ENCODE measurements at regions of chr4 and their contacts with region 1.

Region 1: DNA sequence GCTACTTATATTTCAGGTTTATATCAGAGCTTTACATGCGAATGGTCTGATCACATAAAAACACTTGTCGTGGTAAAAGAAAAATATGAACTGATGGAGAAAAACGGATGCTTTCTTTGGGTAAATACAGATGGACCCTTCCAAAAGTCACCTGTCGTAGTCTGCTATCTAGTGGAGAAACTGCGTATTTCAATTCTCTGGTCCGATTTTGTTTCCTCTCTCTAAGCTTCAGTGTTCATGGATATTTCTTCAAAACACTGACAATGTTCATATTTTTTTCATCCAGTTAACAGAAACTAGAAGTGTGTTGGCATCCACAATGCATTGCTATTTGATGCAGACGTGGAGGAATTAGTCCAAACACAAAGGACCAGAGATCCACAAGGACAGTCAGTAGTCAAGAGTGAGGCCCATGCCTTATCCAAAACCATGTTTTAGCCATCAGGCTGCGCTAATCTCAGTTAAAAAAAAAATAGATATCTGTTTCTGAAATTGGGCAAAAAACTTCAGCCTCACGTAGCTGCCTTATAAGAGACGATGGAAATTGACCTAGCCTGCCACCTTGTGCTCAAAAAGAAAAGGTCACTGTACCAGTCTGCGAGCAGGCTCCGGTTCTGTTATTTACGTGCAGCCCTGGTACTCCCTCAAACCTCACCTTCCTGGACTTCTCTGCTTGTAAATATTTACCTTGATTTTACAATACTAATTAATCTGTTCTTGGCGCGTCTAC is 16.0 kb downstream of the MEPE start:
- DNase-seq: peak; percentile 60
- ATAC-seq: peak; percentile 93
- H3K4me3 Mint-ChIP-seq: no peak overlapping the region
- H3K27ac Mint-ChIP-seq: no peak overlapping the region
- H3K4me1 Mint-ChIP-seq: peaks cover 11% of the 10 kb centered on the region
- H3K27me3 Mint-ChIP-seq: peaks cover 15% of the 10 kb centered on the region

Region 2: DNA sequence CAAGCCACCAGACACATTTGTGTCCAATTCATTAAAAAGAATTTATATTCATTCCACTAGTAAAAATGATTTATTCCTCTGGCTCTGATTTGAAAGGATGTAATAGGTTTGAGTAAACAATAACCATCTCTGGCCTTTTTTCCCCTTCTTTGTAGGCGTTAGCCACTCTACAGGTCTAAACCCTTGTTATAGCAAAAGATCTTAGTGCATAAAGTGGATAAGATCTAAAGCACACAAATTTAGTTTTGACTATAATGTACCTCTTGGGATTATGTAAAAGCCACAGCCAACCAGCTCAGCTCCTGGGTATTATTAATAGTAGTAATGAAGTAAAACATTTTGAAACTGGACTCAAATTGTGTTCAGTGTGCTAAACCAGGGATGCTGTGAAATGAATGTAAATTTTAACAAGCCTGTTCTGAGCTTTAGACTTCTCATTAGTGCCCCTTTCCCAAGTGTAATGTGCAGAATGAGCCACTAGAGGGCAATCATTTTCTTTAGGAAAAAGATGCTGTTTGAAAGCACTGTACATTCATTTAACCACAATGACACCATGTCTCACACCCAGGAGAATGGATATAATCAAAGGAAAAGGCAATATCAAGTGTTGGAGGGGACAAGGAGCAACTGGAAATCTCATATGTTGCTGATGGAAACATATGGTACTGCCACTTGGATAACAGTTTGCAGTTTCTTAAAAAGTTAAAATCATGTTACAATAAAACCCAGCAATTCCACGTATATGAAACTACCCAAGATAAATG is 698.1 kb before region 1 on chr4:
- CTCF ChIA-PET with region 1: interaction called, 3 read pairs
- POLR2A ChIA-PET with region 1: no interaction called
- intact Hi-C with region 1: loop called in 1 of 2 experiments (anchors 5 kb)
- DNase-seq: peak; percentile 56
- ATAC-seq: peak; percentile 76
- H3K4me3 Mint-ChIP-seq: no peak overlapping the region
- H3K27ac Mint-ChIP-seq: no peak overlapping the region
- H3K4me1 Mint-ChIP-seq: no peaks in the 10 kb centered on the region
- H3K27me3 Mint-ChIP-seq: no peaks in the 10 kb centered on the region

Region 3: GRCh38 chr4:87498446-87498900 is 350.3 kb before region 1 on chr4:
- CTCF ChIA-PET with region 1: interaction called, 3 read pairs
- POLR2A ChIA-PET with region 1: no interaction called
- intact Hi-C with region 1: loop called in 1 of 2 experiments (anchors 5 kb)
- DNase-seq: no peak
- ATAC-seq: peak; percentile 47
- H3K4me3 Mint-ChIP-seq: no peak overlapping the region
- H3K27ac Mint-ChIP-seq: no peak overlapping the region
- H3K4me1 Mint-ChIP-seq: peaks cover 17% of the 10 kb centered on the region
- H3K27me3 Mint-ChIP-seq: peaks cover 2% of the 10 kb centered on the region

Region 4: DNA sequence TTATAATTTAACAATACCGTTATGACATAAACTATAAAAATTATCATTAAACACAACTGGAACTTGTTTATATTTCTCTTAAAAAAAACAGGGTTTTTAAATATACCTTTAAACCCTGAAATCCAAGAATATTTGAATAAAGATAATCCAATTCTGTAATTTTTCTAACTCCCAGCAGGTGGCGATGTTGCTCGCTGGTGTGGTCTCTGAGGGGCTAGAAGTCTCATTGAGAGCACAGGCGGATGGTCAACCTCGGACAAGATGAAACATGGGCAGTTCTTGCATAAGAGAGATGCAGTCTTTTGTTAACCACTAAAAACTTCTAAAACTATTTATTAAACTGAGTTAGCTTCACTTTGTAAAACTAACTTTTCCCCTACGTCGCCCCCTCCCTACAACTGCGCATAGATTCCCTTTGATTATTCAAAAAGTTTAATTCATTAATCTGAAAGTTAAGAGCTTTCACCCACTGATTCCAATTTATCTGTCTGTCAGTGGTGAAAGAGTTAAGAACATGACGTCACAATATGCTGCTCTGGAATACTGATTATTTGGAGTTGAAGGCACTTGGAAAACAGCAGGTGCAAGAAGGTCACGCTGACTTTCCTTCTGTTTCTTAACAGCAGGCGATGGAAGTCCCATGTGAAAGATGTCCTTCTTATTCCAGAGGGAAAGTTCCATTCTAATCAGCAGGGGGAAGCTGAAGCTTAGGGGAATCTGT is 169.2 kb before region 1 on chr4:
- CTCF ChIA-PET with region 1: interaction called, 15 read pairs
- POLR2A ChIA-PET with region 1: no interaction called
- intact Hi-C with region 1: loop called (anchors 1 kb)
- DNase-seq: peak; percentile 62
- ATAC-seq: no peak
- H3K4me3 Mint-ChIP-seq: no peak overlapping the region
- H3K27ac Mint-ChIP-seq: no peak overlapping the region
- H3K4me1 Mint-ChIP-seq: no peaks in the 10 kb centered on the region
- H3K27me3 Mint-ChIP-seq: peaks cover 2% of the 10 kb centered on the region

Region 5: GRCh38 chr4:87973283-87974169 is 124.7 kb after region 1 on chr4:
- CTCF ChIA-PET with region 1: interaction called, 43 read pairs
- POLR2A ChIA-PET with region 1: no interaction called
- intact Hi-C with region 1: loop called (anchors 1 kb)
- DNase-seq: peak; percentile 63
- ATAC-seq: peak; percentile 69
- H3K4me3 Mint-ChIP-seq: no peak overlapping the region
- H3K27ac Mint-ChIP-seq: no peak overlapping the region
- H3K4me1 Mint-ChIP-seq: peaks cover 6% of the 10 kb centered on the region
- H3K27me3 Mint-ChIP-seq: peaks cover 33% of the 10 kb centered on the region

Region 6: DNA sequence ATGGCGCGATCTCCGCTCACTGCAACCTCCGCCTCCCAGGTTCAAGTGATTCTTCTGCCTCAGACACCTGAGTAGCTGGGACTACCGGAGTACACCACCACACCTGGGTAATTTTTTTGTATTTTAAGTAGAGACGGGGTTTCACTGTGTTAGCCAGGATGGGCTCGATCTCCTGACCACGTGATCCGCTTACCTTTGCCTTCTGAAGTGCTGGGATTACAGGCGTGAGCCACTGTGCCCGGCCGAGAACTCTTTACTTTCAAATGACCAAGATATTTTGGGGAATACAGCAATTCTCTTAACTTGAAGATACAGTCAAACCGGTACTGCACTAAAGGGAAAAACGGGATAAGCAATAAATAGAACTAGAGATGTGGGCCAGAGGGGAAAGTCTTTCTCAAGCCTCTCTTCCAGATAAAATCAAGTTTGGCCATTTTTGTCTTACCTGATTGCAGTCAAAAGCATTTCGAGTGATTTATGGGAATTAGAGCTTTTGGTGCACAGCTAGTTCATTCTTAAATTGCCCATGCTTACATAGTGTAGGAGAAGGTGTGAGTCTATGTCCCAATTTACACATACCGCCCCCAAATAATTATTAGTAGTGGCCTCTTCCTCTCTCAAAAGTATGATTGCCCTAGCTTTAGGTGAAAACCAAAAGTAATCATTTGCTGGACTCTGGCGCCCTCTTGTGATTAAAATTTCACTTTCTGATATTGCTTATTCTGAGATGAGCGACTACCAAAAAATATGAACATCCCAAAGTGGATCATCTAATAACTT is 362.9 kb after region 1 on chr4:
- CTCF ChIA-PET with region 1: interaction called, 22 read pairs
- POLR2A ChIA-PET with region 1: no interaction called
- intact Hi-C with region 1: loop called (anchors 1 to 2 kb)
- DNase-seq: peak; percentile 60
- ATAC-seq: no peak
- H3K4me3 Mint-ChIP-seq: no peak overlapping the region
- H3K27ac Mint-ChIP-seq: no peak overlapping the region
- H3K4me1 Mint-ChIP-seq: no peaks in the 10 kb centered on the region
- H3K27me3 Mint-ChIP-seq: peaks cover 2% of the 10 kb centered on the region